ENCODE measurements at regions of chr10 and their contacts with region 1.

Region 1: DNA sequence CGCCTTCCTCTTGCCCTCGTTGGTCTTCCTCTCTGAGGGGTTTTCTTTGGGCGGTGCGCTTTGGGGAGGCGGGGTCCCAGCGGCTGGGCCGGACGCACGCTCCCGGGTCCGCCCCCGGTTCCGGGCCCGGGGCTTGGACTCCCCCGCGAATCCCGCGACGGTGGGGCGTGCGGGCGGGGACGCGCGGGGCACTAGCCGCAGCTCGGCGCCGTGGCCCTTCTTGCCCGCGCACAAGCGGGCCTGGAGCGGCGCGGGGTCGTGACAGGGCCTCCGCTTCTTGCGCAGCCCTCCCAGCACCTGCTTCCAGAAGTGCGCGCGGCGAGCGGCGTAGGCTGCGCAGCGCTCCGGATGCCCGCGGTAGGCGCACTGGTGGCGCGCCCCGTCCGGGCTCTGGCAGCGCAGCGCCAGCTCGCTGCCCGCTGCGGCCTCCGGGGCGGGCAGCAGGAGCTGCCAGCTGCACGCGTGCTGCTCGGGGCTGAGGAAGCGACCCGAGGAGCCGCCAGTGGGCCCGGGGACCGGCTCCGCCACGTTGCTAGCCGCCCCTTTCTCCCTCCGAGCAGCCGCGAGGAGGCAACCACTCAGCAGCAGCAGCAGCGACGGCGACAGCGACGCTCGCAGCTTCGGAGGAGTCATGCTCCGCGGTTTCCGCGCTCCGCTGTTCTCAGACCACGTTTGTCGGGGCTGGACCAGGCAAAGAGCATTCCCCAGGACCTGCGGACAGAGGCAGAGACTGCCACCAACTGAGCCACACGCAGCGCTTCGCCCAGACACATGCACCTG is 759 bp downstream of the FGFBP3 start:
- DNase-seq: no peak
- H3K4me3 ChIP-seq: peak overlapping the region; percentile 53
- H3K27me3 ChIP-seq: no peaks in the 10 kb centered on the region; the same call in 1 of the 2 replicates
- CTCF ChIP-seq: peak; percentile 44; the same call in 1 of the 2 replicates

Region 2: DNA sequence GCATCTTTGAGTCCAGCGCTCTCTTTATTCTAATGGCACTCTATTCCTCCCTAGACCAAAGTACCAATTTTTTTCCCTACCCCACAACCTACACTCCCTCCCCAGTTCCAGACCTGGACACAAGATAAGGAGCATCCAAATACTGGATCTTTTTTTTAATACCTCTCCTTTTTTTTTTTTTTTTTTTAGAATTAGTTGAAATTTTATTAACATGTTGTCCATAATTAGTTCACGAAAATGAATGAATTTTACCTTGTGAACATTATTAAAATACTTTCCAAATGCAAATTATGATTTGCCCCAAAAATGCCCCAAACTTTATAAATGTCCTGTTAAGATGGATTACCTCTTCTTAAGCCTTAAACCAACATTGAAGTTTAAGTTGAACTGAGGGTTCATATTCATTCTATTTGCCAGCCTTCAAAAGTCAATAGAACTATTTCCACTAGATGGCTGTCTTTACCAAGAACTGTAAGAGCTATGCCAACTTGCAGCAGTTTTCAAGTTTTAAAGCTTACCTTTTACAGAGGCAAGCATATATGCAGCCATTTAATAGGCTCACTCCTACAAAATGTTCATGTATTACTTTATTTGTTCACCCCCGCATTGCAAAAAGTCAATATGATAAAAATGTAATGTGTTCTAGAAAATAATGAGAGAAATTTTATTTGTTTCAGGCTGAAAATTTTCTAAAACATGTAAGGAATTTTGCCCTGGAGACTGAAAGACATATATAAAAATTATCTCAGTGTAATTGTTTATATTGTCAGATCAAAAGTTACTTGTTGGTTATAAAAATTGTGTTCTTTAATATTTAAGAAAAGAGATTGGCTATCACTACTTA is 150.0 kb before region 1 on chr10:
- CTCF ChIA-PET with region 1: interaction called, 16 read pairs
- POLR2A ChIA-PET with region 1: no interaction called
- DNase-seq: peak; percentile 7
- H3K4me3 ChIP-seq: no peak overlapping the region
- H3K27me3 ChIP-seq: no peaks in the 10 kb centered on the region
- CTCF ChIP-seq: 0 out of 2 replicates have a peak, but pooled peaks have one; percentile 36

Region 3: GRCh38 chr10:91893051-91893450 is 15.5 kb before region 1 on chr10:
- CTCF ChIA-PET with region 1: no interaction called
- POLR2A ChIA-PET with region 1: no interaction called
- DNase-seq: no peak
- H3K4me3 ChIP-seq: no peak overlapping the region
- H3K27me3 ChIP-seq: no peaks in the 10 kb centered on the region
- CTCF ChIP-seq: no peak

Region 4: GRCh38 chr10:91923371-91924211 is 15.1 kb after region 1 on chr10 and contains the start of gene BTAF1:
- CTCF ChIA-PET with region 1: interaction called, 11 read pairs
- POLR2A ChIA-PET with region 1: no interaction called
- DNase-seq: peak; percentile 67
- H3K4me3 ChIP-seq: peak within 1 kb of the TSS; percentile 95
- H3K27me3 ChIP-seq: no peaks in the 10 kb centered on the region
- CTCF ChIP-seq: no peak
- polyA plus RNA-seq, gene BTAF1: 13.9 and 25.7 TPM in 2 replicates

Region 5: GRCh38 chr10:91944880-91945630 is 36.5 kb after region 1 on chr10:
- CTCF ChIA-PET with region 1: no interaction called
- POLR2A ChIA-PET with region 1: no interaction called
- DNase-seq: no peak
- H3K4me3 ChIP-seq: no peak overlapping the region
- H3K27me3 ChIP-seq: no peaks in the 10 kb centered on the region
- CTCF ChIP-seq: no peak